Activated CD4-positive, alpha-beta T cell treated with anti-CD3 and anti-CD28 coated beads for 36 hours (primary cell): ENCODE measurements at regions of chr14 and their contacts with region 1.

Region 1: GRCh38 chr14:24093901-24094761 is at the start of gene PCK2:
- DNase-seq: peak; percentile 95
- ATAC-seq: peak; percentile 87
- H3K4me3 Mint-ChIP-seq: peak within 1 kb of the TSS; percentile 85
- H3K27ac Mint-ChIP-seq: peak within 1 kb of the TSS; percentile 95
- H3K4me1 Mint-ChIP-seq: peaks cover 26% of the 10 kb centered on the region
- H3K27me3 Mint-ChIP-seq: no peaks in the 10 kb centered on the region
- total RNA-seq, gene PCK2: 101 to 115 TPM

Region 2: GRCh38 chr14:23804817-23805216 is 289.3 kb before region 1 on chr14:
- CTCF ChIA-PET with region 1: no interaction called
- POLR2A ChIA-PET with region 1: no interaction called
- intact Hi-C with region 1: no loop called
- DNase-seq: no peak
- ATAC-seq: no peak
- H3K4me3 Mint-ChIP-seq: no peak overlapping the region
- H3K27ac Mint-ChIP-seq: no peak overlapping the region
- H3K4me1 Mint-ChIP-seq: no peaks in the 10 kb centered on the region
- H3K27me3 Mint-ChIP-seq: peaks cover 14% of the 10 kb centered on the region

Region 3: DNA sequence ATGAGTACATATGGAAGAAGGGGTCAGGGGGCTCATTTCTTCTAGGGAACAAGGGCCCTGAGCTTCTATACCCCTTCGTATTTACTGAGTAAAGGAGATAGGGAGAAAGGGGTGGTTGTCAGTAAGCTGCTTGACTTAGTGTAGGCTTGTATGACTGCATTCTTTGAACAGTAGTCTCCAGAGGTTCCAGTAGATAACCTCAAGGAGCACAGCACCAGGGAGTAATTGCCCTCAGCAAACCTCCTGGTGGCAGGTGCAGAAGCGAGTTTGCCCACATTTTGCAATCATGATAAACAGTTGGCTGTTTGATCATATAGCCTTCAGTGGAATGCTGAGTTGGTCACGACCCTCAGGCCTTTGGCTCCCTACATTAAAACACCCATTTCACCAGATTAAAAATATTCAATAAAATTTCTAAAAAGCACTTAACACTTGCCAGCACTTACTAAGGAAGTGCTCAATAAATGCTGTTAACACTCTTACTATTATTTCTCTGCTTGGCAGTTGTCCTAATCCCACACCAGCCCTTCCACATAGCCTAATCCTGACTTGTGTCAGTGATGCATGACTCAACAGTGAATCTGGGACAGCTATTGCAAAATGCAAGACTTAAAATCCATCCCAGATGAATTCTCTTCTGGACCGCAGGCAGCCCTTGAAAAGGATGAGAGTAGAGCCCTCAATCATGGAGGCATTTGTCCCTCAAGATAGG is 109.1 kb before region 1 on chr14:
- CTCF ChIA-PET with region 1: no interaction called
- POLR2A ChIA-PET with region 1: interaction called, 3 read pairs
- intact Hi-C with region 1: loop called (anchors 2 to 5 kb)
- DNase-seq: no peak
- ATAC-seq: no peak
- H3K4me3 Mint-ChIP-seq: no peak overlapping the region
- H3K27ac Mint-ChIP-seq: no peak overlapping the region
- H3K4me1 Mint-ChIP-seq: peaks cover 18% of the 10 kb centered on the region
- H3K27me3 Mint-ChIP-seq: no peaks in the 10 kb centered on the region

Region 4: DNA sequence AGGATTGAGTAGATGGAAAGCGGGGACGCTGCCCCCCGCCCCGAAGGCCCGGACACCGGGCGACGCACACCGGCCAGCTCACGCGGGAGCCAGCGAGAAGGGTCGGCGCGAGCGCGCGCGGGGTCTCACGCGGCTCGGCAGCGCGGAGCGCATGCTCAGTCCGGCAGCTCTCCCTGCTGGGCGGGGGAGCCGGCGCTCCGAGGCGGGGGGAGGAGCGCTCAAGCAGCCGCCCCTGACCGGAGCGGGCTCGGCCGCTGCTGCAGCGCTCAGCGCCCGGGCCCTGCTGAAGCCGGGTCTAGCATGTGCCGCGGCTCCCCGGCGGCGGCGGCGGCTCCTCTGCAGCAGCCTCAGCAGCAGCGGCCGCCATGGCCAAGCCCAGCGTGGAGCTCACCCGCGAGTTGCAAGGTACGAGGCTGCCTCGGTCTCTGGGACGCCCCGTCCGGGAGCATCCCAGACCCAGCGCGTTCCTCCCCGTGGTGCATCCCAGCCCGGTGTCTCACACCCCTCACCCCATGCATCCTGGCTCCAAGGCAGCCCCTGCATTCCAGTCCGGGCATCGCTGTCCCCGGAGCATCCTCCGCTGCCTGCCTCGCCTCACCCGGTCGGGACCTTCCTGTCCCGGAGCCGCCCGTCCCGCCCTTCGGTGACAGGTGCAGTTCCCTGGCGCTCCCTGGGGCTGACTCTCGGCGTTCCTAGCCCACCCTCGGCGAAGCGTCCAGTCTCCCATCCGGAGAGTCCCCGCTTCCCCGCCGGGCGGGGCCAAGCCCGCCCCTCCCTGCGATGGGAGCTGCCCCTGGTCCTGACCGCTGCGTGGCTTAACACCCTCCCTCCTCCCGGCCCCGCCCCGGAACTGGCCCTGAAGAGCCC is 42.1 kb before region 1 on chr14 and contains the start of gene CARMIL3:
- CTCF ChIA-PET with region 1: interaction called, 124 read pairs
- POLR2A ChIA-PET with region 1: interaction called, 3 read pairs
- intact Hi-C with region 1: loop called in 1 of 2 experiments (anchors 2 kb)
- DNase-seq: peak; percentile 77
- ATAC-seq: peak; percentile 57
- H3K4me3 Mint-ChIP-seq: peak within 1 kb of the TSS; percentile 57
- H3K27ac Mint-ChIP-seq: peak within 1 kb of the TSS; percentile 67
- H3K4me1 Mint-ChIP-seq: peaks cover 19% of the 10 kb centered on the region
- H3K27me3 Mint-ChIP-seq: peaks cover 8% of the 10 kb centered on the region
- total RNA-seq, gene CARMIL3: 0.74 to 0.91 TPM

Region 5: GRCh38 chr14:24075485-24076301 is 18.4 kb before region 1 on chr14:
- CTCF ChIA-PET with region 1: interaction called, 83 read pairs
- POLR2A ChIA-PET with region 1: interaction called, 12 read pairs
- intact Hi-C with region 1: no loop called
- DNase-seq: no peak
- ATAC-seq: no peak
- H3K4me3 Mint-ChIP-seq: no peak overlapping the region
- H3K27ac Mint-ChIP-seq: no peak overlapping the region
- H3K4me1 Mint-ChIP-seq: peaks cover 18% of the 10 kb centered on the region
- H3K27me3 Mint-ChIP-seq: peaks cover 2% of the 10 kb centered on the region

Region 6: DNA sequence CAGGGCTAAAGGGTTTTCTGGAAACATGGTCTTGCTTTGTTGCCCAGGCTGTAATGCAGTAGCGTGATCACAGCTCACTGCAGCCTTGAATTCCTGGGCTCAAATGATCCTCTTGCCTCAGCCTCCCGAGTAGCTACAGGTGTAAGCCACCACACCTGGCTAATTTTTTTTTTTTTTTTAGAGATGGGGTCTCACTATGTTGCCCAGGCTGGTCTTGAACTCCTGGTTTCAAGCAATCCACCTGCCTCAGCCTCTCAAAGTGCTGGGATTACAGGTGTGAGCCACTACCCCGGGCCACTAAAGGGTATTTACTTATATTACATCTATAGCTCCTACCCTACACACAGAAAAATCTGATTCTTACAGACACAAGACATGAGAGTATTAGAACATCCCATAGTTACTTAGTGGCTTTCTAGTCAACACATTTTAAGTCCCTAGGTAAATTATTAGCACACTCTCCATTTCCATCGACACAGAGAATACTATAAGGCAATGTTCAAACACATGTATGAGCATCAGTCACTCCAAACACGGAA is 14.3 kb after region 1 on chr14:
- CTCF ChIA-PET with region 1: interaction called, 189 read pairs
- POLR2A ChIA-PET with region 1: interaction called, 6 read pairs
- intact Hi-C with region 1: loop called (anchors 1 kb)
- DNase-seq: no peak
- ATAC-seq: no peak
- H3K4me3 Mint-ChIP-seq: peak overlapping the region; percentile 7
- H3K27ac Mint-ChIP-seq: peak overlapping the region; percentile 94
- H3K4me1 Mint-ChIP-seq: peaks cover 24% of the 10 kb centered on the region
- H3K27me3 Mint-ChIP-seq: no peaks in the 10 kb centered on the region

Region 7: DNA sequence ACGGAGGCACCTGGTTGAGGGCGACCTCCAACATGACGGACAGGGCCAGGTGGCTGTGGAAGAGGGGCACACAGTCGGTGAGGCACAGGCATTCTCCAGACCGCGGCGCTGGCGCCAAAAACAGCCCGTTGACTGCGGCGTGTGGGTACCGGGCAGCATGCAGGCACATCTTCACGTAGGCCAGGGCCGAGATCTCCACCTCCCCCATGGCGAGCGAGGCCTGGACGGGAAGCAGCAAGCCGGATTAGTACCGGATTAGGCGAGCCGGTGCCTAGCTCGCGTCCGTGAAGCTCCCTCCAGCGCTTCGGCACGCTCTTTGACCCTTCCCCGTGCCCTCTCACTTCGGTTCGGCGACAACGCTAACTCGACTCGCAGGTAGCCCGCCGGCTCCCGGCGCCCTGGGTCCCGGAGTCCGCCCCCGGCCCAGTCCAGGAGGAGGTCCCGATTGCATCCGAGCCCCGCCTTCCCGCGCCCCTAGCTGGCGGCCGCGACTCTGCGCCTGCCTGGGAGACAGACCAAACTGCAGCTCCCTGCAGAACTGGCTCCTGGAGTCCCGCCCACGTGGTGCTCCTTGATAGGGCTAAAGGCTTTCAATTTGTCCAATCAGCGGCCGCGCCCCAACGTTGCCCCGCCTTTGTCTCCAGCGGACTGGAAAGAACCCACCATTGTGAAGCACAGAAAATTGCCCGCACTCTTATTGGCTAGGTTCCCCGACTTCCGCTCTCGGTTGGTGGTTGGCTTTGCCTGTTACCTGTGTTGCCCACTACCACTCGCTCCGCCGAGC is 47.2 kb after region 1 on chr14 and contains the start of gene EMC9:
- CTCF ChIA-PET with region 1: interaction called, 4 read pairs
- POLR2A ChIA-PET with region 1: interaction called, 6 read pairs
- intact Hi-C with region 1: loop called in 1 of 2 experiments (anchors 1 kb)
- DNase-seq: peak; percentile 100
- ATAC-seq: peak; percentile 87
- H3K4me3 Mint-ChIP-seq: peak within 1 kb of the TSS; percentile 88
- H3K27ac Mint-ChIP-seq: peak within 1 kb of the TSS; percentile 97
- H3K4me1 Mint-ChIP-seq: peaks cover 66% of the 10 kb centered on the region
- H3K27me3 Mint-ChIP-seq: no peaks in the 10 kb centered on the region
- total RNA-seq, gene EMC9: 36.9 to 46.7 TPM

Region 8: DNA sequence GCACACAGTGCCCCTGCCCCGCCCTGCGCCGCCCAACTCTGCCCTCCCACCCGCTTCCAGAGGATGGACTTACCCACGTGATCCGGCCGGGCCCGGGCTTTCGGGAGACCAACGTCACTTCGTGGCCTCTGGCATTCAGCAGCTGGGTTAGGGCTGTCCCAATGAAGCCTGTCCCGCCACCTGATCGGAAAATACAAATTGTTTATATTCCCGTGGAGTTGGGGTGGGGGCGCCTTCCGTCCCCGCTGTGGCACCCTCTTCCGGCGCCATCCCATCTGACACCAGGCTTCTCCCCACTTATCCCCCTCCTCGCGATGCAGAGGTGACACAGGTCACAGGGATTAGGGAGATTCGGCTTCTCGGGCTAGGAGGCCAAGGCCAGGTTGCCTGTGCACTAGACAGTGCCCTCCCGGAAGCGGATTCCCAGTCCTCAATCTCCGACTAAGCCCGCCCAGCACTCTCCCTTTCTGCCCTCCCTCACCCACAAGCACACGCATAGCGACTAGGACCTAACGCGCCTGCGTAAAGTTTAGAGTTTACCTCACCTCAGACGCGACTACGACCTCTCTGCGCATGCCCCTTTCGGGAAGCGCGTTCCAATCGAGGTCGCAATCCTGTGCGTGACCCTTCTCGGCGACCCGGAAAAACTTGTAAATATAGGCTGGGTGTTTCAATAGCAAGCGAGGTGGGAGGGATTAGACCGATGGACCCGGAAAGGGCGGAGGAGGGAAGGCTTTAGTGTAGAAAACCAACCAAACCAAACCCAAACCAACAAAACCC is 348.3 kb after region 1 on chr14 and contains the start of gene SDR39U1:
- CTCF ChIA-PET with region 1: no interaction called
- POLR2A ChIA-PET with region 1: no interaction called
- intact Hi-C with region 1: loop called in 1 of 2 experiments (anchors 1 kb)
- DNase-seq: peak; percentile 98
- ATAC-seq: peak; percentile 92
- H3K4me3 Mint-ChIP-seq: peak within 1 kb of the TSS; percentile 97
- H3K27ac Mint-ChIP-seq: peak within 1 kb of the TSS; percentile 99
- H3K4me1 Mint-ChIP-seq: peaks cover 41% of the 10 kb centered on the region
- H3K27me3 Mint-ChIP-seq: no peaks in the 10 kb centered on the region
- total RNA-seq, gene SDR39U1: 40.9 to 47.8 TPM

Region 9: GRCh38 chr14:24761141-24761540 is 667.0 kb after region 1 on chr14:
- CTCF ChIA-PET with region 1: no interaction called
- POLR2A ChIA-PET with region 1: no interaction called
- intact Hi-C with region 1: no loop called
- DNase-seq: no peak
- ATAC-seq: no peak
- H3K4me3 Mint-ChIP-seq: no peak overlapping the region
- H3K27ac Mint-ChIP-seq: no peak overlapping the region
- H3K4me1 Mint-ChIP-seq: no peaks in the 10 kb centered on the region
- H3K27me3 Mint-ChIP-seq: peaks cover 17% of the 10 kb centered on the region